Heart right ventricle (tissue), 16 donors: ENCODE measurements at regions of chr16 and their contacts with region 1.

Region 1: GRCh38 chr16:391885-392335 is 5.1 kb upstream of the NME4 start:
- DNase-seq: no peak
- ATAC-seq: peak in 7 of 8 donors; percentile 20 to 69 (median 50)
- H3K4me3 ChIP-seq: no peak overlapping the region
- H3K27ac ChIP-seq: no peak overlapping the region
- H3K4me1 ChIP-seq: peaks cover 0 to 26% (median 18%) of the 10 kb centered on the region in 9 donors
- H3K27me3 ChIP-seq: no peaks in the 10 kb centered on the region
- CTCF ChIP-seq: peak; percentile 36 to 72 (median 66)

Region 2: GRCh38 chr16:278863-279366 is 113.0 kb before region 1 on chr16:
- intact Hi-C with region 1: no loop called
- DNase-seq: peak in 1 of 2 donors; percentile 50
- ATAC-seq: peak; percentile 11 to 67 (median 54)
- H3K4me3 ChIP-seq: no peak overlapping the region
- H3K27ac ChIP-seq: no peak overlapping the region
- H3K4me1 ChIP-seq: peaks cover 0 to 38% (median 22%) of the 10 kb centered on the region in 9 donors
- H3K27me3 ChIP-seq: peaks cover 0 to 66% (median 20%) of the 10 kb centered on the region in 7 donors
- CTCF ChIP-seq: no peak

Region 3: DNA sequence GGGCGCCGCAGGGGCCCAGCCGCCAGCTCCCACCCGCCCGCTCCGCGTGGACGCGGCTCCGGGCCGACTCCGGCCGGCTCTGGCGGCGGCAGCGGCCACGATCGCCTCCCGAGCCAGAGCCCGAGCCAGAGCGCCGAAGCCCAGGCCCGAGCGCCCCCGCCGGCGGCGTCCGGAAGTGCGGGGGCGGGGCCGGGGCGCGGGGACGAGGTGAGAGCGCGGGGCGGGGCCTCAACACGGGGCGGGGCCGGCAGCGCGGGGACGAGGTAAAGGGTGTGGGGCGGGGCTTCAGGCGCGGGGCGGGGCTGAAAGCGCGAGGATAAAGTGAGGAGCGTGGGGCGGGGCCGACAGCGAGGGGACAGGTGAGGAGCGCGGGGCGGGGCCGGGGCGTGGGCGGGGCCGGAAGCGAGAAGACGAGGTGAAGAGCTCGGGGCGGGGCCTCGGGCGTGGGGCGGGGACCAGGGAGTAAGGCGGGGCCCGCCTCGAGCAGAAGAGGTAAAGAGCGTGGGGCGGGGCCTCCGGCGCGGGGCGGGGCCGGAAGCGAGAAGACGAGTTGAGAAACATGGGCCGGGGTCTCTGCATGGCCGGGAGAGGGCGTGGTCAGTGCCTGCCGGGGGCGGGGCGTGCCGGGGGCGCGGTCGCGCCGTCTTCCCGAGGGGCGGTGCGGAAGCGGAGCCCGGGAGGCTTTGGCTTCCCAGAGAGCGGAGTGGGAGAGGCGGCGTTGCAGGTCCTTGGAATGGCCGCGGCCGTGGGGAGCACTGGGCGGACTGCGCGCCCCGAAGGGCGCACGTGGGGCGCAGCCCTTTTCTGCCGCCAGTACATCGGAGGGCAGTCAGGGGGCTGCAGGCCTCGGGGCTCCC is 39.1 kb before region 1 on chr16 and contains the start of gene AXIN1:
- intact Hi-C with region 1: no loop called
- DNase-seq: peak; percentile 97 to 99
- ATAC-seq: peak; percentile 89 to 97 (median 95)
- H3K4me3 ChIP-seq: peak within 1 kb of the TSS; percentile 42 to 85 (median 68)
- H3K27ac ChIP-seq: peak within 1 kb of the TSS in 9 of 10 donors; percentile 44 to 81 (median 57)
- H3K4me1 ChIP-seq: peaks cover 5 to 31% (median 15%) of the 10 kb centered on the region in 9 donors
- H3K27me3 ChIP-seq: no peaks in the 10 kb centered on the region
- CTCF ChIP-seq: peak; percentile 29 to 82 (median 49)
- total RNA-seq, gene AXIN1: 7.7 to 16.1 (median 9.2) TPM

Region 4: GRCh38 chr16:430904-431303 is 39.0 kb after region 1 on chr16:
- intact Hi-C with region 1: loop called in 1 of 10 experiments (anchors 1 kb)
- DNase-seq: no peak
- ATAC-seq: no peak
- H3K4me3 ChIP-seq: no peak overlapping the region
- H3K27ac ChIP-seq: no peak overlapping the region
- H3K4me1 ChIP-seq: peaks cover 0 to 39% (median 22%) of the 10 kb centered on the region in 9 donors
- H3K27me3 ChIP-seq: peaks cover 0 to 6% (median 0%) of the 10 kb centered on the region in 7 donors
- CTCF ChIP-seq: no peak

Region 5: GRCh38 chr16:483341-484075 is 91.6 kb after region 1 on chr16:
- intact Hi-C with region 1: loop called in 1 of 10 experiments (anchors 10 kb)
- DNase-seq: peak in 1 of 2 donors; percentile 37
- ATAC-seq: peak; percentile 58 to 91 (median 77)
- H3K4me3 ChIP-seq: no peak overlapping the region
- H3K27ac ChIP-seq: peak overlapping the region in 7 of 10 donors; percentile 15 to 77 (median 68)
- H3K4me1 ChIP-seq: peaks cover 0 to 16% (median 6%) of the 10 kb centered on the region in 9 donors
- H3K27me3 ChIP-seq: no peaks in the 10 kb centered on the region
- CTCF ChIP-seq: no peak

Region 6: GRCh38 chr16:660459-661183 is 268.7 kb after region 1 on chr16:
- intact Hi-C with region 1: no loop called
- DNase-seq: peak; percentile 87 to 89
- ATAC-seq: peak; percentile 74 to 92 (median 86)
- H3K4me3 ChIP-seq: peak overlapping the region in 6 of 10 donors; percentile 31 to 45 (median 40)
- H3K27ac ChIP-seq: peak overlapping the region in 9 of 10 donors; percentile 35 to 77 (median 64)
- H3K4me1 ChIP-seq: peaks cover 0 to 16% (median 12%) of the 10 kb centered on the region in 9 donors
- H3K27me3 ChIP-seq: no peaks in the 10 kb centered on the region
- CTCF ChIP-seq: peak; percentile 20 to 79 (median 63)